Colonic mucosa (tissue), 4 donors: ENCODE measurements at regions of chr1 and their contacts with region 1.

Region 1: DNA sequence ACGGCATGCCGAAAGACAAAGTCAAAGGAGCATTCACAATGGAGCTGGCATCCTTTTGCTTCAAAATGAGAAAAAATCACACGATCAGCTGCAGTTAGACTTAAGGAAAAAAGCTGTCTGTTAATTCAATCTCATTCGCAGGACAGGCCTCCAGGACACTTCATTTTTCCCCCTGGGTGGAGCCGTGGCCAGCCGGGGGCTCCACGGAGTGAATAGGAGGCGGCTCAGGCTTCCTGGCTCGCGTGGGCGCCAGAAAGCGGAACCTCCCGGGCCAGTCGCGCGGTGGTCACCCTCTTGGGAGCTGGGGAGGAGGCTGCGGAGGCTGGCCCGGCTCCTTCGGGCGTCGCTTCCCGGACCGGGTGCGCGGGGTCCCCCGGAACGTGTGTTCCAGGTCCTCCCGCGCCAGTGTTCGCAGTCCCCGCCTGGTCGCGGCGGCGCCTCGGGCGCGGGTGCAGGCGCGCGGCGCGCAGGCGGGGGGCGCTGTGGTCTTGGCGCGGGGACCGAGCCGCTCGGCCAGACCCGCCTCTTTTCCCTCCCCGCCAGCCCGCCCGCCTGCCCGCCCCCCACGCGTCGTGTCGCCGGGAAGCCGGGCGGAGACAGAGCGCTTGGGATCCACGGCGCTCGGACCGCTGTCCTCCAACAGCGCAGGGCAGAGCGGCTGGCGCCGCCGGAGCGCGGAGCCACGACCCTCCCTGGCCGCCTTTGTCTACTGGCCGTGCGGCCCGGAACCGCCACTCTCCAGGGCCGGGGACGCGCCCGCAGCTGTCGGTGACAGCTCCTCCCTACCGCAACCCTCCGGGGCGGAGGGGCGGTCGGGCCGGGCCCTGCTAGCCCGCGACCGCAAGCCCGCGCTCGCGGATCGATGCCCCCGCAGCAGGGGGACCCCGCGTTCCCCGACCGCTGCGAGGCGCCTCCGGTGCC is at the start of gene RHOU:
- DNase-seq: peak; percentile 76
- H3K4me3 ChIP-seq: peak within 1 kb of the TSS; percentile 80
- H3K27ac ChIP-seq: peak within 1 kb of the TSS; percentile 83
- H3K4me1 ChIP-seq: no peaks in the 10 kb centered on the region
- H3K27me3 ChIP-seq: no peaks in the 10 kb centered on the region
- CTCF ChIP-seq: peak; percentile 74
- total RNA-seq, gene RHOU: 13.3 to 24.3 TPM

Region 2: DNA sequence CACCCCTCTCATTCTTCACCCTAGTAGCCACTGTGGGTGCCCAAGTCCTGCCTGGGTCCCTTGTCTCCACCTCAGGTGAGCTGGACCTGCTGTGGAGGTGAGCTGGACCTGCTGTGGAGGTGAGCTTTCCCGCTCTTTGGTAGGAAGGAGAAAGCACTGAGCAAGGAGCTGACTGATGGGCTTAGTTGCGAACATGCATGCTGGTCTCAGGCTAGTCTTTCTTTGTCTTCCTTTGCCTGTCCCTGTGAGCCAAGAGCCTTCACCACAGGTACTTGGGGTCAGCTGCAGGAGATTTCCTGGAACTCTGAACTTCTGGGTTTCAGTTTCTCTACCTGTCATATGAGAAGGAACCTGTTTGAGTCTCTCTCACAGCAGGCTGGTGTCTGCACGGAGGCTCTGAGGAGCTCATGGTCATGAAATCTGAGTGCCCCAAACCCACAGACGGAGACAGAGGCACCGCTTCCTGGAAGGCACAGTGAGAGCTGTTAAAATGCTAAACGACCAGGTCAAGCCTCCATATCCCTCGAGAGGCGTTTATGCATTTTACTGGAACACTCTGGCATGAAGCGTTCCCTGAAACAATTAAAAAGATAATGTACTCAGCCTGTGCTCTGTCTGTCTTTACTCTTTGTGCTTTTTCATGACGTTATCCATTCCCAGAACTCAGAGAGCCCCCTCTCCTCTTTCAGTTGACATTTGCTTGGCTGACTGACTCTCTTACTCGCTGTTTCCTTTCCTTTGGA is 69.7 kb after region 1 on chr1:
- intact Hi-C with region 1: loop called (anchors 5 kb)
- DNase-seq: no peak
- H3K4me3 ChIP-seq: no peak overlapping the region
- H3K27ac ChIP-seq: no peak overlapping the region
- H3K4me1 ChIP-seq: no peaks in the 10 kb centered on the region
- H3K27me3 ChIP-seq: no peaks in the 10 kb centered on the region
- CTCF ChIP-seq: no peak

Region 3: GRCh38 chr1:229156872-229157271 is 421.7 kb after region 1 on chr1:
- intact Hi-C with region 1: loop called (anchors 10 kb)
- DNase-seq: no peak
- H3K4me3 ChIP-seq: no peak overlapping the region
- H3K27ac ChIP-seq: no peak overlapping the region
- H3K4me1 ChIP-seq: no peaks in the 10 kb centered on the region
- H3K27me3 ChIP-seq: no peaks in the 10 kb centered on the region
- CTCF ChIP-seq: peak; percentile 28

Region 4: GRCh38 chr1:229229731-229230139 is 494.6 kb after region 1 on chr1:
- intact Hi-C with region 1: loop called (anchors 2 kb)
- DNase-seq: peak; percentile 48
- H3K4me3 ChIP-seq: no peak overlapping the region
- H3K27ac ChIP-seq: no peak overlapping the region
- H3K4me1 ChIP-seq: peaks cover 5% of the 10 kb centered on the region
- H3K27me3 ChIP-seq: no peaks in the 10 kb centered on the region
- CTCF ChIP-seq: no peak